ENCODE measurements at regions of chr10 and their contacts with region 1.

Region 1: DNA sequence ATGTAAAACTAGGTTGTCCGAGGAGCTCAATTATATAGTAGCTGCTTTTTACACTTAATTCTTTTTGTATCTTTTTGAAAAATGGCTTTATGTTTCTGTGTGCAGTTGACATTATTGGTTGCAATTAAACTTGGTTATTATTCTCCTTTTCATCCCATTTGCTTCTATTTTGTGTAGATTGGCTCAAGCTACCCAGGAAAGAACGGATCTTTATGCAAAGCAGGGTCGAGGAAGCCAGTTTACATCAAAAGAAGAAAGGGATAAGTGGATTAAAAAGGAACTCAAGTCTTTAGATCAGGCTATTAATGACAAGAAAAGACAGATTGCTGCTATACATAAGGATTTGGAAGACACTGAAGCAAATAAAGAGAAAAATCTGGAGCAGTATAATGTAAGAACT is 16.5 kb downstream of the SMC3 start:
- DNase-seq: no peak
- ATAC-seq: no peak
- H3K4me3 ChIP-seq: no peak overlapping the region
- H3K27ac ChIP-seq: no peak overlapping the region
- H3K4me1 ChIP-seq: no peaks in the 10 kb centered on the region
- CTCF ChIP-seq: no peak
- EP300 ChIP-seq: no peak
- POLR2A ChIP-seq: no peak
- RAD21 ChIP-seq: no peak

Region 2: DNA sequence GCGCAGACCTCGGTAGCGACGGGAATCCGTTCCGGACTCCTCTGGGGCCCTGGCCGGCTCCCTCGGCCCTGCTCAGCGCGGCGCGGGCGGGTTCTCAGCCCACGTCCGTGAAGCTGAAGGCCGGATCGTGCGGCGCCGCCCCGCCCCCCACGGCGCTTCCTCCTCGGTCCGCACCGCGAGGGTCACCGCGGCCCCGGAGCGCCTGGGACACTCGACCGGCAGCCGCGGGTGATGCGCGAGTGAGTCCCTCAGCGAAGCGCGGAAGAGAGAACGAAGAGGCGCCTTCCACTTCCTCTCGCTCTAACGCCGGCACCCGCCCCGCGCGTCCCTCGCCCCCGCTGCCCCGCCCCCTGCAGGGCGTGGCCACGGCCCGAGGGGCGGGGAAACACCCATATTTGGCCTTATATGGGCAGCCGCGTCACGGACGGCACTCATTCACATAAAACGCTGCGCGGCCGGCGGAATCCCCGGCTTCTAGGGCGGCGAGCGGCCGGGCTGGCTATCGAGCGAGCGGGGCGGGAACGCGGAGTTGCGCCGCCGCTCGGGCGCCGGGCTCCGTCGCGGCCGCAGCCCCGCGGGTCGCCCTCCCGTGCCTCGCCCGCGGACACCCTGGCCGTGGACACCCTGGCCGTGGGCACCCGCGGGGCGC is 86.4 kb before region 1 on chr10 and contains the start of gene DUSP5:
- CTCF ChIA-PET with region 1: no interaction called
- POLR2A ChIA-PET with region 1: no interaction called
- DNase-seq: peak; percentile 85 to 93
- ATAC-seq: peak; percentile 48 to 50
- H3K4me3 ChIP-seq: peak within 1 kb of the TSS; percentile 86
- H3K27ac ChIP-seq: peak within 1 kb of the TSS; percentile 96
- H3K4me1 ChIP-seq: peaks cover 49% of the 10 kb centered on the region
- CTCF ChIP-seq: peak; percentile 19; the same call in 1 of the 3 replicates
- EP300 ChIP-seq: no peak
- POLR2A ChIP-seq: peak; percentile 98
- RAD21 ChIP-seq: peak; percentile 9 to 22; a peak in 3 of 5 replicates
- polyA plus RNA-seq, gene DUSP5: 152 and 171 TPM in 2 replicates

Region 3: DNA sequence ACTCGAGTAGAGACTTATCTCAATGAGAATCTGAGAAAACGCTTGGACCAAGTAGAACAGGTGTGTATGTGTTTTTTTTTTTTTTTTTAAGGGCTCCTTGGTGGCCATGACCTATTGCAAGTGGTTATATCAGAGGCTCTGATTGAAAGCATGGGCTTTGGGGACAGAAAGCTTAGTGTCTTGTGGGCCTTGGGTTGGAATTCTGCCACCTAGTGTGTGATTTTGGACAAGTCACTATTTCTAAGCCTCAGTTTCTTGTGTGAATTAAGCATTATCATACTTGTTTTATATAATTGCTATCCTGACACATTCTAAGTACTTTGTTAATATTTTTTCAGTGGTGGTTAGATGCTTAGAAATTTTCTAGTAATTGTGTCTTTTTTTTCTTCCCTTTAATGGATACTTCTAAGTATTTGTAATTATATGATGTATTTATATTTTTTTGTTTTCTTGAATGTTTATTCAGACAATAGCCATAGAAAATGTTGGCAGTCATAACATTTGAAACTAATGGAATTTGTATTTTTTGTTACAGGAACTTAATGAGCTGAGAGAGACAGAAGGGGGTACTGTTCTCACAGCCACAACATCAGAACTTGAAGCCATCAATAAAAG is 16.6 kb after region 1 on chr10:
- CTCF ChIA-PET with region 1: interaction called, 25 read pairs
- POLR2A ChIA-PET with region 1: no interaction called
- DNase-seq: peak; percentile 27 to 82
- ATAC-seq: peak; percentile 71 to 91; a peak in 5 of 6 replicates
- H3K4me3 ChIP-seq: no peak overlapping the region
- H3K27ac ChIP-seq: peak overlapping the region in 1 of 2 experiments; percentile 22; a peak in 1 of 6 replicates
- H3K4me1 ChIP-seq: peaks cover 3% of the 10 kb centered on the region; the same call in 1 of the 3 replicates
- CTCF ChIP-seq: peak; percentile 82
- EP300 ChIP-seq: no peak
- POLR2A ChIP-seq: no peak
- RAD21 ChIP-seq: peak; percentile 65

Region 4: GRCh38 chr10:111522551-111522950 is 938.5 kb after region 1 on chr10:
- CTCF ChIA-PET with region 1: no interaction called
- POLR2A ChIA-PET with region 1: no interaction called
- DNase-seq: no peak
- ATAC-seq: no peak
- H3K4me3 ChIP-seq: no peak overlapping the region
- H3K27ac ChIP-seq: no peak overlapping the region
- H3K4me1 ChIP-seq: no peaks in the 10 kb centered on the region
- CTCF ChIP-seq: no peak
- EP300 ChIP-seq: no peak
- POLR2A ChIP-seq: no peak
- RAD21 ChIP-seq: no peak